Activated T-helper 2 cell treated with anti-CD3 and anti-CD28 coated beads, Interferon-gamma antibody, Interleukin-2, Interleukin-4, amounts not matched to agents 10 μg/mL and 5 μg/mL and 100 μg/mL, durations not matched to agents 14 hours and 24 hours and 36 hours (primary cell): ENCODE measurements at regions of chr2 and their contacts with region 1.

Region 1: GRCh38 chr2:144230448-144231085 is 289.4 kb downstream of the ZEB2 start:
- DNase-seq: no peak
- H3K4me3 Mint-ChIP-seq: no peak overlapping the region
- H3K27ac Mint-ChIP-seq: peak overlapping the region; percentile 31
- H3K4me1 Mint-ChIP-seq: peaks cover 65% of the 10 kb centered on the region
- H3K27me3 Mint-ChIP-seq: no peaks in the 10 kb centered on the region

Region 2: GRCh38 chr2:144132357-144132756 is 98.2 kb before region 1 on chr2:
- intact Hi-C with region 1: loop called (anchors 2 kb)
- DNase-seq: no peak
- H3K4me3 Mint-ChIP-seq: no peak overlapping the region
- H3K27ac Mint-ChIP-seq: no peak overlapping the region
- H3K4me1 Mint-ChIP-seq: peaks cover 31% of the 10 kb centered on the region
- H3K27me3 Mint-ChIP-seq: no peaks in the 10 kb centered on the region

Region 3: DNA sequence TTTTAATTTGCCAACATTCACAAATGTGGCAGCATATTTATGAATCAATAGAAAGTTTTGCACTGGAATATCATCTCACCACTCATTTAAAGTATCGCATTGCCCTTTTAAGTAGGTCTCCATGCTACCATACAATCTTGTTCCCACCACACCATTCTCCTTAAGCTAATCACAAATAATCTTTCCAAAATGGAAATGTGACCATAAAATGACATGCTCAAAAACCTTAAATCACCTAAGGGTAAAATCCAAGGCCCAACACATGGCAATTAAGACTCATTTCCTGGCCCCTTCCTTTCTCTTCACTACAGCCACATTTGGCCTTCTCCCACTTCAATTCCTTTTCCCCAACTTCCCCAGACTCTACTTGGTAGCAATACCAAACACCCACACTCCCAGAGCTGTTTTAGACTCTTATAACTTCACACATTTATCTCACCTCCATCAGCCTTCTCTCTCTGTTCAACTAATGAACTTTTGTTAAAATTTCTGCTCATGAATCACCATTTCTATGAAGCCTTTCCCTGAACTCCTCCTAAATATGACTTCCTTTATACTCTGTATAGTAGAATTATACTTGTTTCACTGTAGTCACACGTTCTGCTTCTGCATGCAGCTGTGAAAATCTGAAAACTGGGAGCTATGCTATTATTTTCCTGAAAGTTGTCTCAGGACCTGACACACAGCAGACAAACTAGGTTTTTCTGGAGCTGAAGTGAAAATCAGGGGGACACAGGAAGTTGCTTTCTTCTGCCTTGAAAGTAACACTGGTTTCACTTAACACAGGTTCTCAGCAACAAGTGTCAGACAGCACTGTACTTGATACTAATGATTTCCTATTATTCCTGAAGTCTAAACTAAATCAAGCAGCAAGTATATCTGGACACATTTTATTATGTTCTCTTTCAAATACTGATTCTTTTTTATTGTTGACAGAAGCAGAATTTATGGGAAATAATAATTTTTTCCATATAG is 14.6 kb before region 1 on chr2:
- intact Hi-C with region 1: loop called (anchors 1 kb)
- DNase-seq: no peak
- H3K4me3 Mint-ChIP-seq: peak overlapping the region; percentile 40
- H3K27ac Mint-ChIP-seq: peak overlapping the region; percentile 94
- H3K4me1 Mint-ChIP-seq: peaks cover 46% of the 10 kb centered on the region
- H3K27me3 Mint-ChIP-seq: no peaks in the 10 kb centered on the region

Region 4: GRCh38 chr2:144275340-144275739 is 44.8 kb after region 1 on chr2:
- intact Hi-C with region 1: loop called (anchors 2 kb)
- DNase-seq: no peak
- H3K4me3 Mint-ChIP-seq: no peak overlapping the region
- H3K27ac Mint-ChIP-seq: no peak overlapping the region
- H3K4me1 Mint-ChIP-seq: peaks cover 38% of the 10 kb centered on the region
- H3K27me3 Mint-ChIP-seq: no peaks in the 10 kb centered on the region

Region 5: DNA sequence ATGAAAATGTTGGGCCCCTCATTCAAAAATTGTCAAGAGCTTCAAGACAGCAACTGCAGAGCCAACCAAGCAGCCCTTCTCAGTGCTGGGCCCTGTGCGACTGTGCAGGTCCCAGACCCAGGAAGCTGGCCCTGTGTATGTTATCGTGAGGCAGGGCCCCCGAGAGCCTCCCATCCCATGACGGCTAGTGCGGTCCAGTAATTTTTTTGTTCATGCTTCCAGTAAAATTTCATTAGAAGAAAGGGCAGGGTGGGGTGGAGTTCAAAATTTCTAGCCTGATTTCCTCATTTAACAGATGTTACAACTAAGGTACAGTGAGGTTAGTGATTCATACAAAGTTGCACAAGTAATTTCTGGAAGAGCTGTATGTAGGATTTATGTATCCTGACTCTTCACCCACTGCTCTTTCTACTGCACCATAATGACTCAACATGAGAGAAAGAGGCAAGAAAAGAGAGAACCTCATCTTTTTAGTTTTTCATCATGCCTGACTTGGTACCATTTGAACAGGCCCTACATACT is 183.8 kb after region 1 on chr2:
- intact Hi-C with region 1: loop called (anchors 2 kb)
- DNase-seq: no peak
- H3K4me3 Mint-ChIP-seq: no peak overlapping the region
- H3K27ac Mint-ChIP-seq: peak overlapping the region; percentile 81
- H3K4me1 Mint-ChIP-seq: peaks cover 24% of the 10 kb centered on the region
- H3K27me3 Mint-ChIP-seq: no peaks in the 10 kb centered on the region

Region 6: GRCh38 chr2:144572977-144573376 is 342.4 kb after region 1 on chr2:
- intact Hi-C with region 1: loop called (anchors 5 kb)
- DNase-seq: no peak
- H3K4me3 Mint-ChIP-seq: no peak overlapping the region
- H3K27ac Mint-ChIP-seq: no peak overlapping the region
- H3K4me1 Mint-ChIP-seq: peaks cover 24% of the 10 kb centered on the region
- H3K27me3 Mint-ChIP-seq: peaks cover 21% of the 10 kb centered on the region